Panc1 (cell line): ENCODE measurements at regions of chr19 and their contacts with region 1.

Region 1: GRCh38 chr19:11374433-11375142 is at the start of gene SWSAP1:
- DNase-seq: peak; percentile 97
- ATAC-seq: peak; percentile 94
- H3K4me3 ChIP-seq: peak within 1 kb of the TSS; percentile 62 to 73
- H3K27ac ChIP-seq: peak within 1 kb of the TSS; percentile 88
- H3K4me1 ChIP-seq: peaks cover 29% of the 10 kb centered on the region
- H3K27me3 ChIP-seq: no peaks in the 10 kb centered on the region
- CTCF ChIP-seq: no peak
- total RNA-seq, gene SWSAP1: 3.1 TPM

Region 2: DNA sequence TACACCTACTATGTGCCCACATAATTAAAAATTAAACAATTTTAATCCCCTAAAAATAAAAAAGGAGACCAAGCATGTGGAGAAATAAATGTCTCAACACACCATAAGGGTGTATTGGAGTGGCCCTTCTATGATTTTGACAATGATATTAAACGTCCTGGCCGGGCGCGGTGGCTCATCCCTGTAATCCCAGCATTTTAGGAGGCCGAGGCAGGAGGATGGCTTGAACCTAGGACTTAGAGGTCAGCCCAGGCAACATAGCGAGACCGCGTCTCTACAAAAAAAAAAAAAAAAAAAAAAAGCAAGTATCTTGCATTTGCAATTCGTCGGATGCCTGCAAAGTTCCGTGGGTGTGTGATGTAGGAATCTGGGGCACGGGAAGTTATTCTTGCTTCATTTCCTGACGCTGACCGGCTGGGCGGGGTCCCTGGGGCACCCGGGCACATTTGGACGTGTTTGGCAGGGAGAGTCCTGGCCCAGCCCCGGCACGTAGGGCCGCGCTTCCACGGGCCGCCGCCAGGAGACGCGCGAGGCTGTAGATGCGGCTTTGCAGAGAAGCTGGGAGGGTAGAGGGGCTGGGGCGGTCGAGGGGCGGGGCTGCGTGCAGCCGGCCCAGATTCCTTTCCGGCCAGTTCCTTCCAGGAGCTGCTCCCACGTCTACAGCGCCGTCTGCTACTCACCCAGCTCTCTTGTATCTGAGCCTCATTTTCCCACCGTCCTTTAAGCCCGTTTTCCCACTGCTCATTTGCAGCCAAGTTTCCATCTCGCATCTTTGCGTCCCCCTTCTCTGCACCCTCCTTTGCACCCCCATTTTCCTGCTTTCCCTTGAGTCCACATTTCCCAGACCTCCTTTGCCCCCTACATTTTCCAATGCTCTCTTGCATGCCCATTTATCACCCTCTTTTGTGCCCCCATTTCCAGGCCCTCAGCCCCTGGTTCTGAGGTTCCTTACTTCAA is 80.9 kb before region 1 on chr19:
- CTCF ChIA-PET with region 1: interaction called, 13 read pairs
- POLR2A ChIA-PET with region 1: no interaction called
- in situ Hi-C with region 1: no loop called
- intact Hi-C with region 1: no loop called
- DNase-seq: peak; percentile 82
- ATAC-seq: peak; percentile 99
- H3K4me3 ChIP-seq: peak overlapping the region; percentile 34 to 55
- H3K27ac ChIP-seq: peak overlapping the region; percentile 70
- H3K4me1 ChIP-seq: no peaks in the 10 kb centered on the region; the same call in 1 of the 2 replicates
- H3K27me3 ChIP-seq: no peaks in the 10 kb centered on the region
- CTCF ChIP-seq: peak; percentile 97

Region 3: DNA sequence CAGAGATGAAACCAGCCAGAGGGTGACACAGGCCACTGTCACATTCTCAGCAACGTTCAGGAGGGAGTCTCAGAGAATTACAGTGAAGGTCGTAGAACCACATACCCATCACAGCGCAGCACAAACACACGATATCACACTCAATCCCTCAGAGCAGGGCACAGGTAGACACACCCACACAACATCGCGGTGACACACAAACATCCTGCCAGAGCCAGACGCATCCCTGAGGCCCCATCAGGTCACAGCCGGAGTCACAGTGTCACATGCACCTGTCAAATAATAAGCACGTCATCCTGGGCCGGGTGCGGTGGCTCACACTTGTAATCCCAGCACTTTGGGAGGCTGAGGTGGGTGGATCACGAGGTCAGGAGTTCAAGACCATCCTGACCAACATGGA is 88.8 kb after region 1 on chr19:
- CTCF ChIA-PET with region 1: no interaction called
- POLR2A ChIA-PET with region 1: interaction called, 11 read pairs
- in situ Hi-C with region 1: no loop called
- intact Hi-C with region 1: no loop called
- DNase-seq: no peak
- ATAC-seq: no peak
- H3K4me3 ChIP-seq: no peak overlapping the region
- H3K27ac ChIP-seq: no peak overlapping the region
- H3K4me1 ChIP-seq: no peaks in the 10 kb centered on the region
- H3K27me3 ChIP-seq: no peaks in the 10 kb centered on the region
- CTCF ChIP-seq: no peak

Region 4: DNA sequence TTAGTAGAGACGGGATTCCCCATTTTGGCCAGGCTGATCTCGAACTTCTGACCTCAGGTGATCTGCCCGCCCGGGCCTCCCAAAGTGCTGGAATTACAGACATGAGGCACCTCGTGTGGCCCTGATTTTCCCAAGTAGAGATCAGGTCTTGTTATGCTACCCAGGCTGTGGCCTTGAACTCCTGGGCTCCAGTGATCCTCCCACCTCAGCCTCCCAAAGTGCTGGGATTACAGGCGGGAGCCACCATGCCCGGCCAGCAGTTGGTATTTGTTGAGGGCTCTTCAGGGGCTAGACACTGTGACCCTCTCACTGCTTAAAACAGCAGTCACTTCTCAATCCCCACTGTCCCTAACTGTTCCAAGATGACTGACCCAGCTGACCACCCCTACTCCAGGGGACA is 114.8 kb after region 1 on chr19:
- CTCF ChIA-PET with region 1: no interaction called
- POLR2A ChIA-PET with region 1: no interaction called
- in situ Hi-C with region 1: no loop called
- intact Hi-C with region 1: no loop called
- DNase-seq: no peak
- ATAC-seq: no peak
- H3K4me3 ChIP-seq: no peak overlapping the region
- H3K27ac ChIP-seq: no peak overlapping the region
- H3K4me1 ChIP-seq: no peaks in the 10 kb centered on the region
- H3K27me3 ChIP-seq: no peaks in the 10 kb centered on the region
- CTCF ChIP-seq: no peak

Region 5: DNA sequence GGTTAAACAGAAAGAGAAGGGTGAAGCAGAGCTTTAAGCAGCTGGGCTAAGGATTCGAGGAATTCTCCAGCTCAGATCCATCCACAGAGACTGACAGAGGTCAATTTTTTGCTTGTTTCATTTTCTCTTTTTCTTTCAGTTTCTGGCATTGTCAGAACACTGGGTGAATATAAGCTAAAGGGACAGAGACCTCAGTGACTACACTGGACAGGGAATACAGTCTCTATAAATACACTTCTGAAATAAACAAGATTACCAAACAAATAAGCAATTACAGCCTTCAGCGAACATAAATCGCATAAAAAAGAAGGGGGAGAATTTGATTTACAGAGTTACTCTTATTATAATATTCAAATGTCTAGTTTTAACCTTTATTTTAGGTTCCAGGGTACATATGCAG is 388.5 kb after region 1 on chr19:
- CTCF ChIA-PET with region 1: no interaction called
- POLR2A ChIA-PET with region 1: no interaction called
- in situ Hi-C with region 1: no loop called
- intact Hi-C with region 1: no loop called
- DNase-seq: no peak
- ATAC-seq: no peak
- H3K4me3 ChIP-seq: no peak overlapping the region
- H3K27ac ChIP-seq: no peak overlapping the region
- H3K4me1 ChIP-seq: no peaks in the 10 kb centered on the region
- H3K27me3 ChIP-seq: no peaks in the 10 kb centered on the region
- CTCF ChIP-seq: no peak